H1 (cell line): ENCODE measurements at regions of chr2 and their contacts with region 1.

Region 1: GRCh38 chr2:127387655-127388422 is at the start of gene MAP3K2:
- DNase-seq: peak in 1 of 2 experiments; percentile 93
- H3K4me3 ChIP-seq: peak within 1 kb of the TSS; percentile 69 to 92 (median 78)
- H3K27ac ChIP-seq: peak within 1 kb of the TSS; percentile 77; the same call in 1 of the 2 replicates
- H3K4me1 ChIP-seq: peaks cover 0 to 8% (median 3%) of the 10 kb centered on the region in 4 experiments; a peak in 3 of 7 replicates
- H3K27me3 ChIP-seq: no peaks in the 10 kb centered on the region; a peak in 1 of 7 replicates
- CTCF ChIP-seq: no peak
- EP300 ChIP-seq: no peak
- POLR2A ChIP-seq: peak; percentile 74 to 84
- RAD21 ChIP-seq: no peak
- total RNA-seq, gene MAP3K2: 23.2 and 24.2 TPM in 2 replicates

Region 2: DNA sequence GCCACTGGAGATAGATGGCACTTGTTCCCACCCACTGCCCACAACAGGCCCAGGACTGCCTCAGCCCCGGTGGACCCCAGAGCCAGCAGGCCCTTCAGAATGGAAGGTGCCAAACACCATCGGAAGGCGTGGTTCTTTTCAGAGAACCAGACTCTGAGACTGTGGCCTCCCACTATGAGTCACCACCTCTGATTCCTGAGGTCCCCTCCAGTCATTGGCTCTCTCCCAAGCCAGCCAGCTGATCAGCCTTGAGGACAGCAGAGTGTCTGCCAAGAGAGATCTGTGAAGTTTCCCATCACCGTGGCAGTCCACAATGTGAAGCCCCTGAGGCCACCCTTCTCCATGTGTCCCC is 10.4 kb after region 1 on chr2:
- CTCF ChIA-PET with region 1: interaction called, 6 read pairs
- POLR2A ChIA-PET with region 1: interaction called, 12 read pairs
- DNase-seq: no peak
- H3K4me3 ChIP-seq: no peak overlapping the region
- H3K27ac ChIP-seq: no peak overlapping the region
- H3K4me1 ChIP-seq: peaks cover 0 to 4% (median 2%) of the 10 kb centered on the region in 4 experiments; a peak in 1 of 7 replicates
- H3K27me3 ChIP-seq: no peaks in the 10 kb centered on the region
- CTCF ChIP-seq: no peak
- EP300 ChIP-seq: no peak
- POLR2A ChIP-seq: no peak
- RAD21 ChIP-seq: no peak